Pancreas (tissue), 10 donors: ENCODE measurements at regions of chr2 and their contacts with region 1.

Region 1: GRCh38 chr2:190088917-190089316 is 26.4 kb upstream of the MSTN start:
- DNase-seq: peak in 3 of 6 donors; percentile 20 to 52 (median 24)
- ATAC-seq: peak; percentile 75 to 95 (median 90)
- H3K4me3 ChIP-seq: no peak overlapping the region
- H3K27ac ChIP-seq: no peak overlapping the region
- H3K4me1 ChIP-seq: peaks cover 0 to 6% (median 0%) of the 10 kb centered on the region in 3 donors
- H3K27me3 ChIP-seq: no peaks in the 10 kb centered on the region
- CTCF ChIP-seq: peak; percentile 32 to 50 (median 41)

Region 2: DNA sequence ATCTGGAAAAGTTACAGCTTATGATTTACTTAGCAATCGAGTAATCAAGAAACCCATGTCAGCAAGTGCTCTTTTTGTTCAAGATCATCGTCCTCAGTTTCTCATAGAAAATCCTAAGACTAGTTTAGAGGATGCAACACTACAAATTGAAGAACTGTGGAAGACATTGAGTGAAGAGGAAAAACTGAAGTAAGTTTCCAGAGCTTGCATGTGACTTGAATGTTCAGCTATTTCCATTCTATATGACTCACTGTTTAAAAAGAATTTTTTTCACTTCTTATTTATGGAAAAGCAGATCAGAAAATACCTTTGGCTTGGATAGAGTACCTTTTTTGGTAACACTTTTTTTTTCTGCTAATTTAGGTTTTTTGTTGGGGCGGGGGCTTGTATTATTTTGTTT is 234.0 kb before region 1 on chr2:
- intact Hi-C with region 1: no loop called
- DNase-seq: no peak
- ATAC-seq: no peak
- H3K4me3 ChIP-seq: no peak overlapping the region
- H3K27ac ChIP-seq: no peak overlapping the region
- H3K4me1 ChIP-seq: no peaks in the 10 kb centered on the region
- H3K27me3 ChIP-seq: no peaks in the 10 kb centered on the region
- CTCF ChIP-seq: no peak

Region 3: DNA sequence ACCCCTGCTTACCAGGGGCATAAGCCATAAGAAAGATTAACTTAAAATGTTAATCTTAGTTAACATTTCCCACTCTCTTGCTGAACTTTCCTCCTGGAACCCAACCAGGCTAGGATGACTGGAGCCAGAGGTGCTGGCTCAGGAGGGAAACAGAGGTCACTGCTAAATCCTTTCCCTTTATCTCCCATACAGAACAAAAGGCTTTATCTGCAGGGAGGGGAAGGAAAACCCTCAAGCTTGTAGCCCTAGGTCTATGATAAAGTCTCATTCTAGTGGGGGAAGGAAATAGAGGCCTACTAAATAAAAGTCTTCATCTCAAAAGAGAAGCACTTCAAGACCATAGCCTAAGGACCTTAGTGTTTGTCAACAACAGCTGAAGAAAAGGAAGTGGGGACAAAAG is 212.1 kb after region 1 on chr2:
- intact Hi-C with region 1: loop called in 1 of 3 experiments (anchors 10 kb)
- DNase-seq: no peak
- ATAC-seq: no peak
- H3K4me3 ChIP-seq: no peak overlapping the region
- H3K27ac ChIP-seq: no peak overlapping the region
- H3K4me1 ChIP-seq: no peaks in the 10 kb centered on the region
- H3K27me3 ChIP-seq: no peaks in the 10 kb centered on the region
- CTCF ChIP-seq: no peak

Region 4: DNA sequence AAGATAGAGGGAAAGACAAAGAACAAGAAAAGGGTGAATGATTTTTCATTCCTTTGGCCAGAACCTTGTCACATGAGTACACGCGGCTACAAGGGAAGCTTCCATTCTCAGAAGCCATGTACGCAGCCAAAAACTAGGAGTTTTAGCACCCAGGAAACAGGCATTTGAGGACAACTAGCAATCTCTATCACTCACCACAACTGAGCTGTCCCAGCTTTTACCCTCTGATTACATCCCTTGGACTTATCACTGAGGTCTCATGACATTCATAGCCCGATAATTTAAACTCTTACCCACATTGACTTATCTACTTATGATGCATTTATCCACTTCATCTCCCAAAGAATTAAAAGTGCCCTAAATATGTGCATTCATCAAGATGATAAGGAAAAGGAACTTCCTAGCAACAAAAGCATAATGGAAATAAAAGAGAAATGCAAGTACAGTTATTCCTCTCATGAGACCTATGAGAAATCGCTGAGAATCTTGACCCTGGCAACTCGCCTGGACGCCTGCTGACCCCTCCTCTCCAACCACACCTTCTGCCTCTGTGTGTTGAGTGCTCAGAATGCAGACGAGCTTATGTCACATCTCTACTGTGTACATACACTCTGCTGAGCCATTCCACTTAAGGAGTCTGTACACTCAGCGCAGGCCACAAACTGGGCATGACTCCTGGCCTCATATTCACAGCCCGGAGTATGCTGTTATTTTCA is 290.5 kb after region 1 on chr2:
- intact Hi-C with region 1: loop called in 1 of 3 experiments (anchors 10 kb)
- DNase-seq: no peak
- ATAC-seq: peak in 2 of 4 donors; percentile 56 to 59
- H3K4me3 ChIP-seq: no peak overlapping the region
- H3K27ac ChIP-seq: no peak overlapping the region
- H3K4me1 ChIP-seq: no peaks in the 10 kb centered on the region
- H3K27me3 ChIP-seq: no peaks in the 10 kb centered on the region
- CTCF ChIP-seq: no peak